Activated CD8-positive, alpha-beta T cell treated with anti-CD3 and anti-CD28 coated beads for 36 hours (primary cell): ENCODE measurements at regions of chr2 and their contacts with region 1.

Region 1: GRCh38 chr2:29115797-29116781 is 874 bp downstream of the CLIP4 start:
- DNase-seq: peak; percentile 89
- ATAC-seq: peak; percentile 57
- H3K4me3 Mint-ChIP-seq: peak overlapping the region; percentile 81
- H3K27ac Mint-ChIP-seq: peak overlapping the region; percentile 87
- H3K4me1 Mint-ChIP-seq: peaks cover 49% of the 10 kb centered on the region
- H3K27me3 Mint-ChIP-seq: no peaks in the 10 kb centered on the region
- CTCF ChIP-seq: no peak

Region 2: DNA sequence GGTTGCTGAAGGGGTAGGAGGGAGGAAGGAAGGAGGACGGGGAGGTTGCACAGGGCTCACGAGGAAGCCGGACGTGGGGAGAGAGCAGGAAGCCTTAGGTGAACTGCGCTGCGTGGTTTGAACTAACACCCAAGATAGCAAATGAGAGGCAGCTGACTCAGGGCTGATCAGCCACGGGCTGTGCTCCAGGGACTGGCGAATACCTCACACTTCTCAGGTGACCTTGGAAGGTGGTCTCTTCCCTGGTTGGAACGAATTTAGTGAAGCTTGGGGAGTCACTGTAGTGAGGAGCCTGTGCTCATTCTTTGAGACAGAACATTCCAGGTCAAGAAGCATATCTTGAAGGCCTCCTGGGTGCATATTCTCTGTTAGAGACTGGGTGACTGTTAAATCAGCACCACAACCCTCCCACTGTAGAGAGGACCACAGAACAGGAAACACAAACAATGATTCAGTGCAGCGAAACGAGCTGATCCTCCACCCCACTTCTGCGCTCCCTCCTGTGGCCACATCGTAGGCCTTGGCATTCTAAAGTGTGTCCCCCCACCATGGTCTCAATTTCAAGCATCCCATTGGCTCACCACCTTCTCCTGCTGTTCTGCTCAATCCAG is 101.2 kb before region 1 on chr2:
- CTCF ChIA-PET with region 1: interaction called, 3 read pairs
- POLR2A ChIA-PET with region 1: interaction called, 29 read pairs
- intact Hi-C with region 1: loop called (anchors 10 kb)
- DNase-seq: peak; percentile 88
- ATAC-seq: peak; percentile 76
- H3K4me3 Mint-ChIP-seq: peak overlapping the region; percentile 79
- H3K27ac Mint-ChIP-seq: peak overlapping the region; percentile 97
- H3K4me1 Mint-ChIP-seq: peaks cover 76% of the 10 kb centered on the region
- H3K27me3 Mint-ChIP-seq: no peaks in the 10 kb centered on the region
- CTCF ChIP-seq: peak; percentile 37

Region 3: GRCh38 chr2:29068513-29068912 is 47.6 kb before region 1 on chr2:
- CTCF ChIA-PET with region 1: no interaction called
- POLR2A ChIA-PET with region 1: no interaction called
- intact Hi-C with region 1: no loop called
- DNase-seq: no peak
- ATAC-seq: no peak
- H3K4me3 Mint-ChIP-seq: no peak overlapping the region
- H3K27ac Mint-ChIP-seq: no peak overlapping the region
- H3K4me1 Mint-ChIP-seq: no peaks in the 10 kb centered on the region
- H3K27me3 Mint-ChIP-seq: no peaks in the 10 kb centered on the region
- CTCF ChIP-seq: no peak

Region 4: GRCh38 chr2:29105375-29105774 is 10.7 kb before region 1 on chr2:
- CTCF ChIA-PET with region 1: no interaction called
- POLR2A ChIA-PET with region 1: interaction called, 10 read pairs
- intact Hi-C with region 1: no loop called
- DNase-seq: no peak
- ATAC-seq: no peak
- H3K4me3 Mint-ChIP-seq: no peak overlapping the region
- H3K27ac Mint-ChIP-seq: no peak overlapping the region
- H3K4me1 Mint-ChIP-seq: peaks cover 2% of the 10 kb centered on the region
- H3K27me3 Mint-ChIP-seq: no peaks in the 10 kb centered on the region
- CTCF ChIP-seq: no peak

Region 5: GRCh38 chr2:29130295-29130694 is 14.2 kb after region 1 on chr2:
- CTCF ChIA-PET with region 1: interaction called, 8 read pairs
- POLR2A ChIA-PET with region 1: interaction called, 25 read pairs
- intact Hi-C with region 1: no loop called
- DNase-seq: peak; percentile 55
- ATAC-seq: peak; percentile 95
- H3K4me3 Mint-ChIP-seq: no peak overlapping the region
- H3K27ac Mint-ChIP-seq: peak overlapping the region; percentile 76
- H3K4me1 Mint-ChIP-seq: peaks cover 40% of the 10 kb centered on the region
- H3K27me3 Mint-ChIP-seq: no peaks in the 10 kb centered on the region
- CTCF ChIP-seq: no peak